ENCODE measurements at regions of chr9 and their contacts with region 1.

Region 1: GRCh38 chr9:134689321-134690181 is 47.9 kb downstream of the COL5A1 start:
- DNase-seq: peak; percentile 88
- H3K4me3 ChIP-seq: no peak overlapping the region; a peak in 1 of 4 replicates
- H3K27ac ChIP-seq: 0 out of 4 replicates have a peak overlapping the region, but pooled peaks of 1 of the 2 experiments have one; percentile 5
- H3K4me1 ChIP-seq: peaks cover 0 to 36% of the 10 kb centered on the region in 2 experiments; a peak in 1 of 4 replicates
- H3K27me3 ChIP-seq: no peaks in the 10 kb centered on the region
- CTCF ChIP-seq: peak; percentile 75
- EP300 ChIP-seq: no peak
- RAD21 ChIP-seq: peak; percentile 55

Region 2: GRCh38 chr9:134458207-134458845 is 231.2 kb before region 1 on chr9:
- CTCF ChIA-PET with region 1: interaction called, 10 read pairs
- POLR2A ChIA-PET with region 1: no interaction called
- DNase-seq: no peak
- H3K4me3 ChIP-seq: no peak overlapping the region
- H3K27ac ChIP-seq: peak overlapping the region in 1 of 2 experiments; percentile 47; a peak in 2 of 4 replicates
- H3K4me1 ChIP-seq: peaks cover 17 to 19% of the 10 kb centered on the region in 2 experiments; a peak in 3 of 4 replicates
- H3K27me3 ChIP-seq: no peaks in the 10 kb centered on the region; the same call in 1 of the 2 replicates
- CTCF ChIP-seq: no peak
- EP300 ChIP-seq: no peak
- RAD21 ChIP-seq: no peak

Region 3: GRCh38 chr9:134544388-134545214 is 144.9 kb before region 1 on chr9:
- CTCF ChIA-PET with region 1: no interaction called
- POLR2A ChIA-PET with region 1: no interaction called
- DNase-seq: no peak
- H3K4me3 ChIP-seq: no peak overlapping the region
- H3K27ac ChIP-seq: peak overlapping the region in 1 of 2 experiments; percentile 38; a peak in 1 of 4 replicates
- H3K4me1 ChIP-seq: peaks cover 0 to 13% of the 10 kb centered on the region in 2 experiments; a peak in 1 of 4 replicates
- H3K27me3 ChIP-seq: no peaks in the 10 kb centered on the region
- CTCF ChIP-seq: peak; percentile 11; the same call in 1 of the 2 replicates
- EP300 ChIP-seq: no peak; a peak in 1 of 4 replicates
- RAD21 ChIP-seq: no peak

Region 4: GRCh38 chr9:134670042-134670525 is 19.5 kb before region 1 on chr9:
- CTCF ChIA-PET with region 1: interaction called, 12 read pairs
- POLR2A ChIA-PET with region 1: no interaction called
- DNase-seq: no peak
- H3K4me3 ChIP-seq: no peak overlapping the region
- H3K27ac ChIP-seq: peak overlapping the region; percentile 67 to 72; a peak in 3 of 4 replicates
- H3K4me1 ChIP-seq: peaks cover 7 to 38% of the 10 kb centered on the region in 2 experiments; a peak in 3 of 4 replicates
- H3K27me3 ChIP-seq: no peaks in the 10 kb centered on the region
- CTCF ChIP-seq: no peak
- EP300 ChIP-seq: peak in 1 of 2 experiments; percentile 80; a peak in 2 of 4 replicates
- RAD21 ChIP-seq: no peak

Region 5: GRCh38 chr9:134707031-134707680 is 17.6 kb after region 1 on chr9:
- CTCF ChIA-PET with region 1: interaction called, 15 read pairs
- POLR2A ChIA-PET with region 1: no interaction called
- DNase-seq: peak; percentile 98
- H3K4me3 ChIP-seq: no peak overlapping the region
- H3K27ac ChIP-seq: peak overlapping the region; percentile 76 to 91
- H3K4me1 ChIP-seq: peaks cover 27 to 63% of the 10 kb centered on the region in 2 experiments; a peak in 3 of 4 replicates
- H3K27me3 ChIP-seq: no peaks in the 10 kb centered on the region
- CTCF ChIP-seq: no peak
- EP300 ChIP-seq: peak; percentile 60 to 84; a peak in 3 of 4 replicates
- RAD21 ChIP-seq: no peak

Region 6: DNA sequence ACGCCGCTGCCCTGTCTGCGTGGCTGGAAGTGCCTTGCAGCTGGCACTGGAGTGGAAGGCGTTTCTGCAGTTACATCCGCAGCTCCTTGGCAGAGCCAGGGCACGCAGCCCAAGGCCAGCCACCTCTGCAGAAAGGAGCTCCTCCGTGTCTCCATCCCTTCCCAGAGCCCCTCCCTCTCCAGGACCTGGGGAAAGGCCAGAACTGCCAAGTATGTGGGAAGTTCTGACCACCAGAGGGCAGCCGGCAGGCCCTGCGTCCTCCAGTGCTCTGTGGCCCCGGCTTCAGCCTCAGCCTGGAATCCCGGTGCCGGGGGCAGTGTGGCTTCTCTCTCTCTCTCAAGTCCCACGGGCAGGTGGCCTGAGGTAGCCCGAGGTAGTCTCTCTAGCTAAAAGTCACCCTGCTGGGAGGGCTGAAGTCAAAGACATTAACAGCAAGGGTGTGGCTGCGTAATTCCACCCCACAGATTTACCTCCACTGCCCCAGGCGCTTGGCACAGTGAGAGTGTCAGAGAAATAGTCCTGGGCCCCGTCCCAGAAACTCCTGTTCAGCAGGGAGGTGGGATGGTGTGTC is 89.4 kb after region 1 on chr9:
- CTCF ChIA-PET with region 1: interaction called, 11 read pairs
- POLR2A ChIA-PET with region 1: no interaction called
- DNase-seq: peak; percentile 84
- H3K4me3 ChIP-seq: no peak overlapping the region
- H3K27ac ChIP-seq: no peak overlapping the region
- H3K4me1 ChIP-seq: peaks cover 0 to 13% of the 10 kb centered on the region in 2 experiments; a peak in 1 of 4 replicates
- H3K27me3 ChIP-seq: no peaks in the 10 kb centered on the region
- CTCF ChIP-seq: peak; percentile 58
- EP300 ChIP-seq: no peak
- RAD21 ChIP-seq: peak; percentile 63

Region 7: DNA sequence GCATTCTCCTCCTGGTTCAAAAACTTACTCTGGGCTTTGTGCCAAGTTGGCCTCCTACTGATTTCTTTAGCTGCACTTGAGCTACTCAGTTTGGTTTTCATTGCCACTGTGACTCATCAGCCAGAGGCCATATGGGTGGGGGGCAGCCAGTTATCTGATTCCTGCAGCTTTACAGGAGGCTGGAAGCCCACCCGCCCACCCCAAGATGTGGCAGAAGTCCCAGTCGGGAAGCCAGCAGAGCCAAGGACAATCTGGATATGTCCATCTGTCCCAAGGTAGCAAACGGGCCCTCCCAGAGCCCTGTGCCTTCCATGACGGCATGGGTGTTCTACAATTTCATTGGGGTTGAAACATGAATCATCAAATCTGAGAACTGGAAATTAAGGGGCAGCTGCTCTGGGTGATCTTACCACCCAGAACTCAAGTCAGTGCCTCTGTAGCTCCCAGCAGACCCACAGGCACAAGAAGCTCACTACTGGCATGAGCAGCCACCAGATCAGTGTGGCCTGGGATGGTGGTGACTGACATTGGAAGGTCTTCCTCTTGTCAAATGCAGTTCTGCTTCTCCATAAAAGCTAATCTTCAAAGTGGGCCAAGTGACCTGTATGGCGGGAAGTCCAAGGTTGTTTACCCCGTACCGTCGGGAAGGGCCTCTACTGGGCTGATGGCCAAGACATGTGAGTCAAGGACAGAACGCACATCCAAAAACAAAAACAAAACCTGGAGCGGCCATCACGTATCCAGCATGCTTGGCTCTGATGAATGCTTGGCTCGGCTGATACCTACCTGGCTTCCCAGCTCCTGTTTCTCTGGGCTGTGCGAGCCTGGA is 206.7 kb after region 1 on chr9:
- CTCF ChIA-PET with region 1: no interaction called
- POLR2A ChIA-PET with region 1: no interaction called
- DNase-seq: no peak
- H3K4me3 ChIP-seq: no peak overlapping the region; a peak in 1 of 4 replicates
- H3K27ac ChIP-seq: no peak overlapping the region
- H3K4me1 ChIP-seq: peaks cover 0 to 9% of the 10 kb centered on the region in 2 experiments; a peak in 2 of 4 replicates
- H3K27me3 ChIP-seq: no peaks in the 10 kb centered on the region
- CTCF ChIP-seq: no peak
- EP300 ChIP-seq: no peak
- RAD21 ChIP-seq: no peak

Measured in SK-N-SH (cell line).